ENCODE measurements at regions of chr3 and their contacts with region 1.

Region 1: GRCh38 chr3:57015350-57015729 is 45.1 kb upstream of the SPATA12 start:
- DNase-seq: no peak
- H3K4me3 Mint-ChIP-seq: no peak overlapping the region
- H3K27ac Mint-ChIP-seq: peak overlapping the region; percentile 68
- H3K4me1 Mint-ChIP-seq: peaks cover 18% of the 10 kb centered on the region
- H3K27me3 Mint-ChIP-seq: no peaks in the 10 kb centered on the region
- CTCF ChIP-seq: no peak

Region 2: DNA sequence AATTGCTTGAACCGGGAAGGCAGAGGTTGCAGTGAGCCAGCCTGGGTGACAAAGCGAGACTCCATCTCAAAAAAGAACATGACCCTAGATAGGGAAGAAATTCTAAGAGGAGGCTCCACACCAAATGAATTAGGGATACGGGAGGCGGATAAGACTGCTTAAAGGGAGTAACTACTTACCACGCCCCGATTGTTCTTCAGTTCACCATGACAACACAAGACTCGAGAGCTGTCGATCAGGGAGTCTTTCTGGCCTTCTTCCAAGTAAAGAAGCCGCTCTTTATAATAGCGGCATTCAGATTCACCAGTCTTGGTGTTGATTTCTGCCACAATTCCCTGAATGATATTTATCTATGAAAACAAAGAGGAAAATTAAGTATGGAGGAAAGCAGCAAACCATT is 278.3 kb before region 1 on chr3:
- CTCF ChIA-PET with region 1: no interaction called
- POLR2A ChIA-PET with region 1: no interaction called
- intact Hi-C with region 1: no loop called
- DNase-seq: no peak
- H3K4me3 Mint-ChIP-seq: no peak overlapping the region
- H3K27ac Mint-ChIP-seq: no peak overlapping the region
- H3K4me1 Mint-ChIP-seq: no peaks in the 10 kb centered on the region
- H3K27me3 Mint-ChIP-seq: no peaks in the 10 kb centered on the region
- CTCF ChIP-seq: no peak

Region 3: DNA sequence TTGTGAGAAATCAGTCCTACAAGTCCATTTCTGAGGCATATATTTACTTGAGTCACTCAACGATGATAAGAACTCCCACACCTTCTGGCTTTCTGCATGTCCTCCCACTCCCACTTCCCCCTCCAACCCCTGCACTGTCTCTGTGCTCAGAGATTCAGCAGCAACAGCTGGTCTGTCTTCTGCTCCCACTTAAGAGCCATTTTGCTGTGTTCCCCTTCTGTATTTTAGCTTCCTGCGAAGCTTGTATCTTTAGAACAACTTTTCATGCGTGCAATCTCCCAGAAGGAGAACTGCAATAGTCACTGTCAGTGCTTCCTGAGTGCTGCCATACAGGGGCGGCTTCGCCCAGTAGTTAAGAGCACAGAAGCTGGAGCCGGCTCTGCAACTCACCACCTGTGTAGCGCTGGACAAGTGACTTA is 44.9 kb before region 1 on chr3:
- CTCF ChIA-PET with region 1: no interaction called
- POLR2A ChIA-PET with region 1: no interaction called
- intact Hi-C with region 1: no loop called
- DNase-seq: no peak
- H3K4me3 Mint-ChIP-seq: no peak overlapping the region
- H3K27ac Mint-ChIP-seq: no peak overlapping the region
- H3K4me1 Mint-ChIP-seq: no peaks in the 10 kb centered on the region
- H3K27me3 Mint-ChIP-seq: no peaks in the 10 kb centered on the region
- CTCF ChIP-seq: no peak

Region 4: GRCh38 chr3:57060089-57060829 is 44.9 kb after region 1 on chr3 and contains the start of gene SPATA12:
- CTCF ChIA-PET with region 1: interaction called, 3 read pairs
- POLR2A ChIA-PET with region 1: interaction called, 11 read pairs
- intact Hi-C with region 1: no loop called
- DNase-seq: peak; percentile 97
- H3K4me3 Mint-ChIP-seq: peak within 1 kb of the TSS; percentile 51
- H3K27ac Mint-ChIP-seq: peak within 1 kb of the TSS; percentile 73
- H3K4me1 Mint-ChIP-seq: peaks cover 30% of the 10 kb centered on the region
- H3K27me3 Mint-ChIP-seq: no peaks in the 10 kb centered on the region
- CTCF ChIP-seq: no peak
- total RNA-seq, gene SPATA12: 0.12 TPM in 1 of 2 replicates, not detected in the other

Region 5: DNA sequence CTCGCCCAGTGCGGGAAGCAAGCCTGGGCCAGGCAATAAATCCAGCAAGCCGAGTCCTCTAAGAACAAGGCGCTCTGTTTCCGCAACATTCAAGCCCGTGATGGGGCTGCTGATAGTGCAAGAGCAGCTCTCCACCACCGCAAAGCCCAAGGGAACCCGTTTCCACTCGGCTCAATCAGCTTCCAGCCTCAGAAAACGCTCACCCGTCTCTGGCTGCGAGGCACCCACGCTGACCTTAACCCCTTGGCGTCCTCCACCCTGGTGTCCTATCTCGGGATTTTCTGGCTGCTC is 62.9 kb after region 1 on chr3:
- CTCF ChIA-PET with region 1: no interaction called
- POLR2A ChIA-PET with region 1: interaction called, 13 read pairs
- intact Hi-C with region 1: no loop called
- DNase-seq: no peak
- H3K4me3 Mint-ChIP-seq: peak overlapping the region; percentile 73
- H3K27ac Mint-ChIP-seq: no peak overlapping the region
- H3K4me1 Mint-ChIP-seq: peaks cover 5% of the 10 kb centered on the region
- H3K27me3 Mint-ChIP-seq: no peaks in the 10 kb centered on the region
- CTCF ChIP-seq: no peak